ENCODE measurements at regions of chr4 and their contacts with region 1.

Region 1: GRCh38 chr4:140252742-140253555 is 99.0 kb upstream of the MAML3 start:
- DNase-seq: no peak
- H3K4me3 ChIP-seq: peak overlapping the region; percentile 60 to 71
- H3K27ac ChIP-seq: peak overlapping the region; percentile 96
- H3K4me1 ChIP-seq: peaks cover 33% of the 10 kb centered on the region
- H3K27me3 ChIP-seq: no peaks in the 10 kb centered on the region
- CTCF ChIP-seq: peak; percentile 62 to 93 (median 74)
- POLR2A ChIP-seq: no peak

Region 2: GRCh38 chr4:139734875-139735380 is 518.0 kb before region 1 on chr4:
- intact Hi-C with region 1: loop called (anchors 2 kb)
- DNase-seq: no peak
- H3K4me3 ChIP-seq: peak overlapping the region; percentile 53 to 54
- H3K27ac ChIP-seq: peak overlapping the region; percentile 88
- H3K4me1 ChIP-seq: peaks cover 30% of the 10 kb centered on the region
- H3K27me3 ChIP-seq: no peaks in the 10 kb centered on the region
- CTCF ChIP-seq: peak in 2 of 3 experiments; percentile 69 to 78
- POLR2A ChIP-seq: peak in 1 of 2 donors; percentile 19

Region 3: GRCh38 chr4:140049024-140049848 is 203.7 kb before region 1 on chr4:
- intact Hi-C with region 1: loop called (anchors 2 kb)
- DNase-seq: no peak
- H3K4me3 ChIP-seq: peak overlapping the region; percentile 33 to 48
- H3K27ac ChIP-seq: peak overlapping the region; percentile 67
- H3K4me1 ChIP-seq: peaks cover 36% of the 10 kb centered on the region
- H3K27me3 ChIP-seq: no peaks in the 10 kb centered on the region
- CTCF ChIP-seq: peak in 1 of 3 experiments; percentile 24
- POLR2A ChIP-seq: no peak

Region 4: GRCh38 chr4:140116442-140117104 is 136.4 kb before region 1 on chr4:
- intact Hi-C with region 1: no loop called
- DNase-seq: no peak
- H3K4me3 ChIP-seq: no peak overlapping the region
- H3K27ac ChIP-seq: no peak overlapping the region
- H3K4me1 ChIP-seq: no peaks in the 10 kb centered on the region
- H3K27me3 ChIP-seq: no peaks in the 10 kb centered on the region
- CTCF ChIP-seq: no peak
- POLR2A ChIP-seq: no peak

Region 5: DNA sequence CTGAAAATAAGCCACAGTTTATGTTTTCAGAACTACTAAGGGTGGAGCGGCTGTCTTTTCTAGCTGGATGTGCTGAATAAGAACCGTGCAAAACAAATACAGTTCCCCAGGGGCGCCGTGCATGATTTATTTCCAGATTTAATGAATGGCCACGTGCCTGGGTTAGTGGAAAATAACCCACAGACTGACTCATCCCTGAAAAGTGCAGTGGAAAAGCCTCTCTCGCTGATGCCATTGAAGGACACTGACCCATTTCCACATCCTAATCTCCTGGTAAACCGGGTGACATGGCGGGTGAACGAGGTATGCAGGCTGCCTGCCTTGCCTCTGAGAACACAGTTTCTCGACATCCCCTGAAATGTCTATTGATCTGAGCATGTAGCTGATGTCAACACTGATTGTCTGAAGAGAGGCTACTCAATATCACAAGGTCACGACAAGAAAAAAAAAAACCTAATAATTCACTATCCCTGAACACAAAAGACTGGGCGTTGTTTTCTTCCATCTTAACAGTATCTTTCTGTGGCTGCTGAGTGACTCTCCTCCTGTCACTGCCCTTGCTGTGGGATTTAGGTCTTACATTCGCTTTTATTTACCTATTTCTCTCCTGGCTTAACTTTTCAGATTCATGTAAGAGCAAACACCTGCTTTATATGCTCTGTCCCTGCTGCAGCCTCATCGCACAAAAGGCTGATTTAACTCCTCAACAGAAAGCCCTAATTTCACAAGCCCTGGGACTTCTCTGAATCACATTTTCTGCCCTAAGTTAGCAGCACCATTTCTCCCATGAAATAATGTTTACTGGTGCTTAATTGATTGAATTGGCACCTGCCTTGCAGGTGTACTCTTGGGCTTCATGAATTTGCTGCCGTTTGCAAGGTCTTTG is 43.6 kb after region 1 on chr4:
- intact Hi-C with region 1: no loop called
- DNase-seq: peak in 1 of 2 donors; percentile 95
- H3K4me3 ChIP-seq: peak overlapping the region in 1 of 2 donors; percentile 21
- H3K27ac ChIP-seq: peak overlapping the region; percentile 60
- H3K4me1 ChIP-seq: peaks cover 22% of the 10 kb centered on the region
- H3K27me3 ChIP-seq: no peaks in the 10 kb centered on the region
- CTCF ChIP-seq: no peak
- POLR2A ChIP-seq: no peak

Measured in vagina (tissue), 2 donors.